CD8-positive, alpha-beta memory T cell (primary cell): ENCODE measurements at regions of chr2 and their contacts with region 1.

Region 1: GRCh38 chr2:69643602-69644505 is at the start of gene AAK1:
- DNase-seq: peak; percentile 73 to 89 (median 85)
- H3K4me3 ChIP-seq: peak within 1 kb of the TSS; percentile 79
- H3K4me3 Mint-ChIP-seq: peak within 1 kb of the TSS; percentile 95 to 99 (median 97)
- H3K27ac ChIP-seq: peak within 1 kb of the TSS; percentile 71
- H3K27ac Mint-ChIP-seq: peak within 1 kb of the TSS; percentile 93 to 98 (median 96)
- H3K4me1 ChIP-seq: peaks cover 46% of the 10 kb centered on the region
- H3K4me1 Mint-ChIP-seq: peaks cover 61 to 72% (median 68%) of the 10 kb centered on the region in 3 donors
- H3K27me3 ChIP-seq: no peaks in the 10 kb centered on the region
- H3K27me3 Mint-ChIP-seq: peaks cover 0 to 4% of the 10 kb centered on the region in 2 donors
- total RNA-seq, gene AAK1: 71.7 to 74.0 TPM

Region 2: GRCh38 chr2:69559442-69560146 is 84.3 kb before region 1 on chr2:
- CTCF ChIA-PET with region 1: interaction called, 25 read pairs
- POLR2A ChIA-PET with region 1: no interaction called
- DNase-seq: no peak
- H3K4me3 ChIP-seq: no peak overlapping the region
- H3K4me3 Mint-ChIP-seq: peak overlapping the region in 2 of 7 donors; percentile 16 to 35
- H3K27ac ChIP-seq: no peak overlapping the region
- H3K27ac Mint-ChIP-seq: peak overlapping the region; percentile 22 to 91 (median 66)
- H3K4me1 ChIP-seq: peaks cover 66% of the 10 kb centered on the region
- H3K4me1 Mint-ChIP-seq: peaks cover 72 to 87% (median 86%) of the 10 kb centered on the region in 3 donors
- H3K27me3 ChIP-seq: no peaks in the 10 kb centered on the region
- H3K27me3 Mint-ChIP-seq: no peaks in the 10 kb centered on the region

Region 3: DNA sequence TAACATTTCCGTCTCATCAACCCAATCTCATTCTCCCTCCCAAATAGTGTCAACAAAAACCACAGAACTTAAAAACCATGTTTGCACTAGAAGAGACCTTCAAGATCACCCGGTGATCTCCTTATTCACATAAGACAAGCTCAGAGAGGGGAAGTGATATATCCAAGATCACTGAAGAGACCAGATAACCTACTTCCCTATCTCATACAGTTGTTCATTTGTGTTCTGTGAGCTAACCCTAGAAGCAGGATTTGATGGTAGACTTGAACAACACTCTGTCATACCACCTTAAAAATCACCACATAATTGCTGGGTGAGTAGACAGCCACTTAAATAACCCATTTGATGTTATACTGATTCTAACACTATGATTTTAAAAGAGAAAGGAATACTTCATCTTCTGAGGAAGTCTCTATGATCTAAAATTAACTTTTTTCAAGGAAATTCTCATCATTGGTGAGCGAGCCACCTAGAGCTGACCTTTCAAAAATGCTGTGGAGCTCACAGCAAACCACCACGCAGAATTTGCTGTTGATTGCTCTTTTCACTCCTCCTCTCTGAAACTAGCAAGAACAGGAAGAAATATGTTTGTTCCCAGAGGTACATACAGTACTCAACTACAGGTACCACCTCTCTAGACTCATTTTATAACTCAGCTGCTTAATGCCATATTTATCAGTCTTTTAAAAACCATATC is 15.4 kb before region 1 on chr2:
- CTCF ChIA-PET with region 1: interaction called, 4 read pairs
- POLR2A ChIA-PET with region 1: interaction called, 12 read pairs
- DNase-seq: no peak
- H3K4me3 ChIP-seq: peak overlapping the region; percentile 9
- H3K4me3 Mint-ChIP-seq: no peak overlapping the region
- H3K27ac ChIP-seq: peak overlapping the region; percentile 1
- H3K27ac Mint-ChIP-seq: peak overlapping the region in 1 of 8 donors; percentile 25
- H3K4me1 ChIP-seq: peaks cover 75% of the 10 kb centered on the region
- H3K4me1 Mint-ChIP-seq: peaks cover under 1 to 19% (median 4%) of the 10 kb centered on the region in 3 donors
- H3K27me3 ChIP-seq: no peaks in the 10 kb centered on the region
- H3K27me3 Mint-ChIP-seq: no peaks in the 10 kb centered on the region

Region 4: GRCh38 chr2:69694894-69695849 is 51.3 kb after region 1 on chr2:
- CTCF ChIA-PET with region 1: interaction called, 12 read pairs
- POLR2A ChIA-PET with region 1: interaction called, 8 read pairs
- DNase-seq: no peak
- H3K4me3 ChIP-seq: no peak overlapping the region
- H3K4me3 Mint-ChIP-seq: peak overlapping the region in 6 of 7 donors; percentile 44 to 87 (median 58)
- H3K27ac ChIP-seq: no peak overlapping the region
- H3K27ac Mint-ChIP-seq: peak overlapping the region in 7 of 8 donors; percentile 6 to 95 (median 77)
- H3K4me1 ChIP-seq: peaks cover 84% of the 10 kb centered on the region
- H3K4me1 Mint-ChIP-seq: peaks cover 78 to 95% (median 94%) of the 10 kb centered on the region in 3 donors
- H3K27me3 ChIP-seq: no peaks in the 10 kb centered on the region
- H3K27me3 Mint-ChIP-seq: no peaks in the 10 kb centered on the region

Region 5: DNA sequence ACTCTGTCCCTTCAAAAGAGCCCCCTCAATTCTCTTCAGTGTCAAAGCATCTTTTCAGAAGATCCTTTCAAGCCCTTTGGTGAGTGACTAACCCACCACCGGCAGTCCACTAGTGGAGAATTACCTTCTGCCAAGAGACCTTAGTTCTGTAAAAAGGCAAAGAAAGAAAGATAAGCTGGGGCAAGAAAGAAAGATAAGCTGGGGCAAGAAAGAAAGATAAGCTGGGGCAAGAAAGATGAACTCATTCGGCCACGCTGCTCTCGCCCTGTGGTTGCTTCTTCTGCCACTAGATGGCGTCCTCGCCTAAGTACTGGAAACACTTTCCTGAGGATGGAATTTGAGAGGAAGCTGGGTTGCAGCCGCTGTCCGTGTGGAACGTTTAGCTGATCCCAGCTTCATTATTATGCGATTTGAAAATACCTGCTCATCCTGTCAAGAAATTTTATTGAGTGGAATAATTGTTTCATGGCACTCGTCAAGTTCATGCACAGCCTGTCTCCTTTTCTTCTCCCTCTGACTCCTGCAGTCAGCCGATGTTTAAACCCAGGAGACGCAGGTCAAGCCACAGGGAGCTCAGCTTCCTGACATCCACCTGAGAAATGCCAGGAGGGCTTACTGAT is 80.8 kb after region 1 on chr2:
- CTCF ChIA-PET with region 1: interaction called, 10 read pairs
- POLR2A ChIA-PET with region 1: no interaction called
- DNase-seq: peak; percentile 71 to 86 (median 77)
- H3K4me3 ChIP-seq: peak overlapping the region; percentile 38
- H3K4me3 Mint-ChIP-seq: peak overlapping the region in 6 of 7 donors; percentile 39 to 74 (median 58)
- H3K27ac ChIP-seq: no peak overlapping the region
- H3K27ac Mint-ChIP-seq: peak overlapping the region in 2 of 8 donors; percentile 33 to 79
- H3K4me1 ChIP-seq: peaks cover 6% of the 10 kb centered on the region
- H3K4me1 Mint-ChIP-seq: peaks cover 4 to 7% (median 7%) of the 10 kb centered on the region in 3 donors
- H3K27me3 ChIP-seq: no peaks in the 10 kb centered on the region
- H3K27me3 Mint-ChIP-seq: peaks cover 0 to 3% of the 10 kb centered on the region in 2 donors

Region 6: DNA sequence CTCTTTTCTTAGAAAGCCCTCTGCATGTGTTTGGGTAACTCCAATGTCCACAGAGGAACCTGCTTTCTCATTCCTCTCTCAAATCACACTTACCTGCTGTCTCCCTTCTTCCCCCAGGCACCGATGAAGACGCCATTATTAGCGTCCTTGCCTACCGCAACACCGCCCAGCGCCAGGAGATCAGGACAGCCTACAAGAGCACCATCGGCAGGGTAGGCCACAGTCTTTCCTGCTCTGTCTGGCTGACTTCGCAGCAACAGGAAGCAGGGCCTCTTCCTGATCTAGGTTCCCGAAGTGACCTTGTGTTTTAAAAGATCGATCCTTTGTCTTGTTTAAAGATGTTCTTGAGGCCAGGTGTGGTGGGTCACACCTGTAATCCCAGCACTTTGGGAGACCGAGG is 160.6 kb after region 1 on chr2:
- CTCF ChIA-PET with region 1: no interaction called
- POLR2A ChIA-PET with region 1: no interaction called
- DNase-seq: no peak
- H3K4me3 ChIP-seq: no peak overlapping the region
- H3K4me3 Mint-ChIP-seq: no peak overlapping the region
- H3K27ac ChIP-seq: no peak overlapping the region
- H3K27ac Mint-ChIP-seq: peak overlapping the region in 3 of 8 donors; percentile 35 to 83 (median 46)
- H3K4me1 ChIP-seq: no peaks in the 10 kb centered on the region
- H3K4me1 Mint-ChIP-seq: peaks cover 10 to 14% (median 12%) of the 10 kb centered on the region in 3 donors
- H3K27me3 ChIP-seq: no peaks in the 10 kb centered on the region
- H3K27me3 Mint-ChIP-seq: peaks cover 0 to 1% of the 10 kb centered on the region in 2 donors